Right ventricle myocardium superior (tissue), 1 donor: ENCODE measurements at regions of chr2 and their contacts with region 1.

Region 1: GRCh38 chr2:26144953-26145680 is 27.8 kb upstream of the GAREM2 start:
- DNase-seq: peak; percentile 76
- ATAC-seq: peak; percentile 88

Region 2: GRCh38 chr2:25951071-25951547 is 194.0 kb before region 1 on chr2:
- intact Hi-C with region 1: loop called (anchors 5 kb)
- DNase-seq: peak; percentile 72
- ATAC-seq: peak; percentile 97

Region 3: DNA sequence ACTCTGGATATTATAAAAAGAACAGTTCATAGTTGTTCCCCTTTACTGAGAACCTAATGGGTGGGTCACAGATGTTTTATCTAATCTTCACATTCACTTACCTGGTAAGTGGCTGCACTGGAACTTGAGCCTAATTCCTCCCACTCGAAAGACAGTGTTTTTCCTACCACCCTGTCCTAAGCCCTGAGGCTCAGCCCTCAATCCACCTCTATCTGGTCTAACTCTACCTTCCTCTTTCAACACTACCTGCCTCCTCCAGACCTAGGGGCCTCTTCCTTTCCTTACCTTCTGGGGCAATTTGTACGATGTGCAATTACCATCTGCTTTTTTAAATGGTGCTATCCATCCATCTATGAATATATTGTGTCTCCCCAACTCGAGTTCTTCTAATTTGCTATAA is 153.2 kb before region 1 on chr2:
- intact Hi-C with region 1: loop called (anchors 1 kb)
- DNase-seq: no peak
- ATAC-seq: peak; percentile 38

Region 4: GRCh38 chr2:26088032-26088643 is 57.0 kb before region 1 on chr2:
- intact Hi-C with region 1: loop called (anchors 2 kb)
- DNase-seq: no peak
- ATAC-seq: peak; percentile 76

Region 5: GRCh38 chr2:26164231-26164630 is 19.1 kb after region 1 on chr2:
- intact Hi-C with region 1: no loop called
- DNase-seq: no peak
- ATAC-seq: peak; percentile 94

Region 6: DNA sequence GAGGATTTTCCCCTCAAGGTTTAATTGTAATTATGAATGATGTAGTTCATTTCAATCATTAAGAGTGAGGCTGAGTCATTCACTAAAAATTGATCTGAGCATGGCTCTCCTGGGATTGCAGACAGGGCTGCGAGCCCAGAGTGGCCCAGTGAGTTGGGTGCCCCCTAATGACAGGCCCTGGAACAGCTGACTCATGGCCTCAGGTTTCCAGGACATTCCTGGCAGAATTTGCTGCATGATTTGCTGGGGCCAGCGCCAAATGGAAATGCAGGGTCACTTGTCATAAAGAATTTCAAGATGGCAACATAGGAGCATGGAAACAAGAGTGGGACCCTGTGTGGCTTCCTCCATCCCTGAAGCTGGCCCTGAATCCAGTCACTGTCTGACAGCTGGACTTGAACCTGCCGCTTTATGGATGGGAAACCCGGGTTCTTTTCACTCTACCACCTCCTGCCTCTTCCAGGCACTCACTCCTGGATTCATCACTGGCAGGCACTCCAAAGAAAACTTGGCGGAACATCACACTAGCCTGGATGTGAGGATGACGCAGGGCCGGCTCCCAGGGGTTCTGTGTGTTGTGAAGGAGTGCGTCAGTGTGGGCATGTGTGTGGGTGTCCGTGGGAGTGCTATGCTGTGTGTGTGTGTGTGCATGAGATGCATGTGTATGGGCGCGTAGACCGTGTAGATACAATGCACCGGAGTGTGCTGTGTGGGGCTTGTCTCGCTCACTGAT is 317.6 kb after region 1 on chr2:
- intact Hi-C with region 1: no loop called
- DNase-seq: peak; percentile 59
- ATAC-seq: peak; percentile 77